ENCODE measurements at regions of chr6 and their contacts with region 1.

Region 1: DNA sequence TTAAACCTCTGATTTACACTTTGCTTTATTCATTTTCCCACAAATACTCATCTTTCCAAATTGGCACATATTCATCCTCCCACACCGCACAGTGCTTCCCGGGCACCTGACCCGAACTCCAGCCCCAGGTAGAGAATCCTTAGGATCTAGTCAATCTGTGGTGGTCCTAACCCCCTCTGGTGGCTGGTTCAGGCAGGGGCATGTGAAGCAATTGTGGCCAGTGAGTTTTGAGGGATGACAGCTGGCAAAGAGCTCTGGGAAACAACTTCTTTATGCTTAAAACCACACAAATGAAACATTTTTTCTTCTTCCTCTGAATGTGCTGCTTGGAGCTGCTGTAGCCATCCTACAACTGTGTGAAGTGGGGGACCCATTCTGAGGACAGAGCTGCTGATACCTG is 54.7 kb downstream of the ELOVL5 start:
- DNase-seq: no peak
- ATAC-seq: peak; percentile 62
- H3K4me3 Mint-ChIP-seq: no peak overlapping the region
- H3K27ac Mint-ChIP-seq: peak overlapping the region; percentile 80
- H3K4me1 Mint-ChIP-seq: peaks cover 89% of the 10 kb centered on the region
- H3K27me3 Mint-ChIP-seq: no peaks in the 10 kb centered on the region
- CTCF ChIP-seq: peak; percentile 26

Region 2: DNA sequence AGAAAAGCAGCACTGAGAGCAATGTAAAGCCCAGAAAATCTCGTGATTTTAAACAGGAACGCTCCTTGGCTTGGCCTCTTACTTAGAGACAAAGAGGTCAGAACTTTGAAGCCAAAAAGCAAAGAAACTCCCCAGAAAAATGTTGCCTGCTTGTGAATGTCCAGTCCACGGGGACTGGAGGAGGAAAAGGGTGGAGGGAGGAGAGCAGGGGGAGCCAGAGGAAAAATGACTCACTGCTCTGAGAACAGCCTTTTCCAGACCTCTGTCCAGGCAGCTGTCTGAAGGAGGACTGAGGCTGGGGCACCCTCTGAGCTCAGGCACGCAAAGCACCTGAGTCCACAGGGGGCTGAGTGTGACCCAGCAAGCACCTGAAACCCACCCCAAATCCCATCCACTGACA is 781.9 kb before region 1 on chr6:
- CTCF ChIA-PET with region 1: no interaction called
- POLR2A ChIA-PET with region 1: no interaction called
- intact Hi-C with region 1: no loop called
- DNase-seq: no peak
- ATAC-seq: no peak
- H3K4me3 Mint-ChIP-seq: no peak overlapping the region
- H3K27ac Mint-ChIP-seq: no peak overlapping the region
- H3K4me1 Mint-ChIP-seq: peaks cover 6% of the 10 kb centered on the region
- H3K27me3 Mint-ChIP-seq: no peaks in the 10 kb centered on the region
- CTCF ChIP-seq: no peak

Region 3: GRCh38 chr6:53033764-53034163 is 260.3 kb before region 1 on chr6:
- CTCF ChIA-PET with region 1: no interaction called
- POLR2A ChIA-PET with region 1: no interaction called
- intact Hi-C with region 1: no loop called
- DNase-seq: no peak
- ATAC-seq: no peak
- H3K4me3 Mint-ChIP-seq: no peak overlapping the region
- H3K27ac Mint-ChIP-seq: no peak overlapping the region
- H3K4me1 Mint-ChIP-seq: no peaks in the 10 kb centered on the region
- H3K27me3 Mint-ChIP-seq: no peaks in the 10 kb centered on the region
- CTCF ChIP-seq: no peak

Region 4: DNA sequence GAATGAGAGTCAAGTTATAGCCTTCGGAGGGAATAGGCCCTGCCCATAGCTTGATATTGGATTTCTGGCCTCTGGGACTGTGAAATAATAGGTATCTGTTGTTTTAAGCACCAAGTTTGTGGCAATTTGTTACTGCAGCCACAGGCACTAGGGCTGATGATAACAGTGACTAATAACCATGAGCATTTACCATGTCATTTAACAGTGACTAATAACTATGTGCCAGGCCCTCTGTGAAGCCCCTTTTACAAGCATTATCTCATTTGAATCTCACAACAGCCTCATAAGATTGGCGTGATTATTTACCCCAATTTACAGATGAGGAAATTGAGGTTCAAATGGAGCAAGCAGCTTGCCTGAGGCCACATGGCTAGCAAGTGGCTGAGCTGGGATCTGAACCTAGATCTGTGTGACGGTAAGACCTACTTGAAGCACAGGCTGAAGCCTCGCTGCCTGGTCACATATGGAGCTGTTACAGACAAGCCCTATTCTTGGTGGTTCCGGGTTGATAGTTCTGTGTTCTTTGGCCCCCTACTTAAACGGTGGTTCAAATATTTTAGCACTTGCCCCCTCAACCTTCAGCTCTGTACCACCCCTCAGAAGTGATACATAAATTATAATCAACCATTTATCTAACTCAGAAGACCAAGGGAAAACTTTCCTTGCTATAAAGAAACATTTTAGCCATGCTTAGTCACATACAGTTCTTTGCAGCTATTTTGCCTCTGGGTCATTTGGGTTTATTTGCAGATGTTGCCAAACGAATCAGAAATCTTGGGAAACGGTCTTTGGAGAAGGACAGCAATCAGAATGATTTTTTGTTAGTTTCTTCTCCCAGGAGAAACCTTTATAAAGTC is 43.7 kb before region 1 on chr6:
- CTCF ChIA-PET with region 1: interaction called, 6 read pairs
- POLR2A ChIA-PET with region 1: interaction called, 8 read pairs
- intact Hi-C with region 1: loop called (anchors 2 kb)
- DNase-seq: no peak
- ATAC-seq: peak; percentile 77
- H3K4me3 Mint-ChIP-seq: peak overlapping the region; percentile 17
- H3K27ac Mint-ChIP-seq: peak overlapping the region; percentile 88
- H3K4me1 Mint-ChIP-seq: peaks cover 82% of the 10 kb centered on the region
- H3K27me3 Mint-ChIP-seq: no peaks in the 10 kb centered on the region
- CTCF ChIP-seq: no peak

Region 5: DNA sequence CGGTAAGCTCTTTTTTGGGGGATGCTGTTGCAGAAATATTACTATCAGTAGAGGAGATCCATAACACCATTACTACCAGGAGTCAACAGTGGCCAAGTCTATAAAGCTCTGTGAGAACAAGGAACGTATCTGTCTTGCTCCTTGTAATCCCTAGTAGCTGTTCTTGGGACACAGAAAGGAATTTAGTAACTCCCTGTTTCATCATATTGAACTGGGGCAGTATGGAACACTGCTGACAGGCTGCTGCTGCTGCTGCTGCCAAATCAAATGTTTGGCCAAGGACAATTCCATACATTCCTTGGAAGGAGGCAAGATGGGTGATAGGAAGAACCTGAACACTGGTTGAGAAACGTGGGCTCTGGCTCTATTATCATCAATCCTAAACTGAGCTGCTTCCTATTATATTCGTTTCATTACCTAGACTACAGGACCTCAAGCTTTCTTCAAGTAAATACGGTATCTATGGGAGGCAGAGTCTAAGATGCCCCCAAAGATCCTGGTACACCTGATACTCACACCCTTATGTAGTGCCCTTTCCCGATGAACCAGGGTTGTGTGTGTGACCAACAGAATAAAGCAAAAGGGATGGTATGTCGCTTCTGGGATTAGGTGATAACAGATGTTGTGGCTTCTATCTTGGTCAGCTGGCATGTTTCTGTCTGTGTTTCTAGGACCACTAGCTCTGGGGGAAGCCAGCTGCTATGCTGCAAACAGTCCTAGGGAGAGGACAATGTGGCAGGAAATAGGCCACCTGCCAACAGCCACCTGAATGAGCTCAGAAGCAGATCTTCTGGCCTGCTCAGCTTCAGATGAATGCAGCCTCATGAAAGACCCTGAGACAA is 15.2 kb after region 1 on chr6:
- CTCF ChIA-PET with region 1: interaction called, 12 read pairs
- POLR2A ChIA-PET with region 1: interaction called, 5 read pairs
- intact Hi-C with region 1: loop called (anchors 2 kb)
- DNase-seq: no peak
- ATAC-seq: peak; percentile 34
- H3K4me3 Mint-ChIP-seq: peak overlapping the region; percentile 57
- H3K27ac Mint-ChIP-seq: peak overlapping the region; percentile 92
- H3K4me1 Mint-ChIP-seq: peaks cover 84% of the 10 kb centered on the region
- H3K27me3 Mint-ChIP-seq: no peaks in the 10 kb centered on the region
- CTCF ChIP-seq: no peak

Region 6: GRCh38 chr6:53410508-53411258 is 116.6 kb after region 1 on chr6:
- CTCF ChIA-PET with region 1: interaction called, 15 read pairs
- POLR2A ChIA-PET with region 1: interaction called, 3 read pairs
- intact Hi-C with region 1: loop called (anchors 1 kb)
- DNase-seq: peak; percentile 20
- ATAC-seq: peak; percentile 98
- H3K4me3 Mint-ChIP-seq: peak overlapping the region; percentile 70
- H3K27ac Mint-ChIP-seq: peak overlapping the region; percentile 82
- H3K4me1 Mint-ChIP-seq: peaks cover 9% of the 10 kb centered on the region
- H3K27me3 Mint-ChIP-seq: no peaks in the 10 kb centered on the region
- CTCF ChIP-seq: no peak

Region 7: DNA sequence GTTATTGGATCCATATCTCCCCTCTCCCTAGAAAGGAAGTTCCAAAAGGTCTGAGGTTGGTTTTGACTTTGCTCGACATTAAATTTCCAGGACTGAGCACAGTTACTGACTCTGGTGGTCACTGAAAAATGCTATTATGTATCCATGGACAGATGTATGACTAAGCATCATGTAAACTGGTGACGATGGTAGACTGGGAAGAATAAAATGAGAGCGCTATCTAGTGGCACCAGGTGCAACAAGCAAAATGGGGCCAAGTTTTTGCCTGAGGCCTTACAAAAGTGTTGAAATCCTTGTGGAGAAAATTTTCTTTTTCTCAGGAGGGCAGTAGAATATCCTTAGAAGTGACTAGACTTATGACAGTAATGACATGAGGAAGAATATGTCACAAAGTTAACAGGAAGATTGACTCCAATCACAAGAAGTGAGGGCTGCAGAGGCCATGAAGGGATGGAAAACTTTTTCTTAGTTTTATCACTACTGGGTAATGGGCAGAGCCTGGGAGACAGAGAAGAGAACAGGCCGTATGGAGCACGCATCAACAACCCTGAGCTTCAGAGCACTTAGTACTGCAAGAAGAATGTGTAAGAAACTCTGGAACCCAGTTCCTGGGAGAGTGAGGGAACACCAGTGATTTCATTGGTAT is 143.6 kb after region 1 on chr6:
- CTCF ChIA-PET with region 1: interaction called, 4 read pairs
- POLR2A ChIA-PET with region 1: interaction called, 6 read pairs
- intact Hi-C with region 1: loop called (anchors 2 kb)
- DNase-seq: no peak
- ATAC-seq: peak; percentile 77
- H3K4me3 Mint-ChIP-seq: no peak overlapping the region
- H3K27ac Mint-ChIP-seq: no peak overlapping the region
- H3K4me1 Mint-ChIP-seq: peaks cover 20% of the 10 kb centered on the region
- H3K27me3 Mint-ChIP-seq: no peaks in the 10 kb centered on the region
- CTCF ChIP-seq: no peak

Region 8: DNA sequence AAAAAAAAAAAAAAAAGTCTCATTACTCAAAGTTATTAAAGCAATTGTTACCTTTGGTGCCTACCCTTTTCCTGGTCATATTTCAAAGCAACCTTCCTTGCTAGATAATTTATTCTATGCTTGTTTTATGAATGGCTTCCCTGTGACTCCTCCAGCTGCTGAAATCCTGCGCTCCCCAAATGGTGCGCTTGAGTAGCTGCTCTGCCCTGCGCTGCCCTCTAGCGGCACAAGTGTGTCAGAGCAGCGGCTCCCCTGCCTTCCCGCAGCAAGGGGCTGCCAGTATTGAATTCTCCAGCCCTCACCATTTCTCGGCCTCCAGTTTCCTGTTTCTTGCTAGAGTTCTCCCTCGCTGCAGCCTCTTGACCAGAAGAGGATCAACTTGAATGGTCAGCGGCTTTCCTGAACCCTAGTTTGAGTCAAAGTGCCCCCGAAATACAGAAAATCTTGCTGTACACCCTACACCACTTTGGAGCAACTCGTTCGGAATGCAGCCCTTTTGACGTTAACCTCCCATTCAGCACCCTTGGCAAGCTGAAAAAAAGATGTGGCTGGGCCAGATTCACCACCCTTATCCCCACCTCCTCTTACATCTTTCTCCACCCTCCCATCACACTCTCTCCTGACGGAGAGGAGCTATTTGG is 431.8 kb after region 1 on chr6:
- CTCF ChIA-PET with region 1: no interaction called
- POLR2A ChIA-PET with region 1: no interaction called
- intact Hi-C with region 1: loop called (anchors 10 kb)
- DNase-seq: peak; percentile 63
- ATAC-seq: peak; percentile 87
- H3K4me3 Mint-ChIP-seq: no peak overlapping the region
- H3K27ac Mint-ChIP-seq: no peak overlapping the region
- H3K4me1 Mint-ChIP-seq: peaks cover 5% of the 10 kb centered on the region
- H3K27me3 Mint-ChIP-seq: peaks cover 9% of the 10 kb centered on the region
- CTCF ChIP-seq: peak; percentile 97

Measured in activated B cell treated with CpG ODN at 0.5 μM for 24 hours (primary cell).